HEK293T (cell line): ENCODE measurements at regions of chr17 and their contacts with region 1.

Region 1: DNA sequence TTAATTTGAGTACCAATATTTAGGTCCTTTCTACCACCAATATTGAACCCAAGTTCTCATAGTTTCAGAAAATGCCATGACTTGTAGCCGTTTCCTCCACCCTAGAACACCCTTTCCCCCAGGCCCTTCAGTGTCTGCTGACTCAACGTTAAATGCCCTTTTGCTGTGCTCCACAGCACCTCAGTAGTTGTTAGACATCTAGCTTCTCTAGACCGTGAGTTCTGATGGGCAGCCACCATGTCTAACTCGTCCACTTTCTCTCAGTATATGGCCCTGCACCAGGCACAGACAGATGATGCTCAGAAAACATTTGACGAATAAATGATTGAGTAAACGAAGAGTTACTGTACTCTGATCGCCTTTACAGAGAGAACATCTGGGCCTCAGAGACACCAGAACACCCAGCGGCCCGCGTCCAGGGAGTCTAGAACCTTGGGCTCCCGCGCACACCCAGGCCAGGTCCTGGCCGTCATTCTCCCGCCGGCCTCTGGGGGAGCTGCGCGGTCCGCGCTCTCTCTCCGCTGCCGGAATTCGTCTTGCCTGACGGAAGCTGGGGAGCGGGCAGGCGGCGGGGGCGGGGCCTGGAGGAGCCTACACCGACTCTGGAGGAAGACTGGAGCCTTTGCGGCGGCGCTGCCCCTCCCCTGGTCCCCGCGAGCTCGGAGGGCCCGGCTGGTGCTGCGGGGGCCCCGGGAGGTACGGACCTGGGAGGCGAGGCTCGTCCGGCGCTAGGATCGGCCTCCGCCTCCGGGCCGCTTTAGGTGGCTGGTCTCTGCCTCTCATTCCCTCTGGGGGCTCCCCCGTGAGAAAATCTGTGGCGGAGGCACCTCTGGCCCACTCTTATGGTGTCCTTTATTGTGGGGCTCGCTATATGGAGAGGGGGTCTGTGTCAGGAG is at the start of gene NKIRAS2:
- DNase-seq: peak; percentile 89

Region 2: GRCh38 chr17:41801374-41802271 is 218.1 kb before region 1 on chr17:
- CTCF ChIA-PET with region 1: no interaction called
- POLR2A ChIA-PET with region 1: no interaction called
- DNase-seq: peak; percentile 88

Region 3: DNA sequence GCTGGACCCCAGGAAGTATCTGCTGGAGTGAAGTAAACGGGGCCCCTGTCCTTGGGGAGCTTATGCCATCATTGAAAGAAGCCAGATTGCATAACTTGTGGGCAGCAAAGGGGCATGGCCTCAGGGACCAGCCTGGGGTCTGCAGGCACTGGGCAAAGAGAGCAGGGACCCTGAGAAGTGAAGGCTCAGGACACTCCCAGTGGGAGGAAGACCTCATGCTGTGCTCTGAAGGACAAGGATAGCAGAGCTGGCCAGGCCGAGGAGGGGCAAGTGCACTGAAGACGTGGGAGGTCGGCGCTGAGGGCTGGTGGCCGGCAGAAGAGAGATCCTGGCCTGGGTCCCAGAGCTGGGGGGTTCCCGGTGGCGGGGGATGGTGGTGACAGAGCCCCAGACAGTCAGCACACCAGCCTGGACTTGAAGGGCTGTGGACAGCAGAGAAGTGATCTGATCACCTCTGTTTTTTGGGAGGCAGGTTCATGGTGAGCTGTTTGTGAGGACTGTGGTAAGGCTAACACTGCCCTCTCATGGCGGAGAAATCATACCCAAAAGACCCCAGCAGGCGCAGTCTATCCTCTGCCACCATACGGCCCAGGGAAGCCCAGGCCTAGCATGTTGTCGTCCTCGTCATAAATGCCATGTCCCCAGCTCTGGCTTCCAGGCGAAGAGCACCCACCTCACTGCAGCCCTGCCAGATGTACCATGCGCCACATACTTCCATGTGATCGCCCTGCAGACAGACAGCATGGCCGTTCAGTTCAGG is 60.2 kb before region 1 on chr17:
- CTCF ChIA-PET with region 1: interaction called, 10 read pairs
- POLR2A ChIA-PET with region 1: interaction called, 117 read pairs
- DNase-seq: peak; percentile 60

Region 4: DNA sequence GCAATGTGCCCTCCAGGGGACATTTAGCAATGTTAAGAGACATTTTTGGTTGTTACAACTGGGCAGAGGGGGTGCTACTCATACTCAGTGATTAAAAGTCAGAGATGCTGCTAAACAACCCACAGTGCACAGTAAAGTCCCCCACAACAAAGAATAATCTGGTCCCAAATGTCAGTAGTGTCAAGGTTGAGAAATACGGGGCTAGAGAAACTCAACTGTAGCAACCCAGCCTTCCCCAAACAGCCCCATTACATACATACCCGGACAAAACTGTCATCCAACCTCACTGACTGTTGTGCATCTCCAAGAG is 22.9 kb before region 1 on chr17:
- CTCF ChIA-PET with region 1: interaction called, 3 read pairs
- POLR2A ChIA-PET with region 1: interaction called, 11 read pairs
- DNase-seq: no peak

Region 5: GRCh38 chr17:42039794-42040763 is 20.3 kb after region 1 on chr17:
- CTCF ChIA-PET with region 1: interaction called, 3 read pairs
- POLR2A ChIA-PET with region 1: interaction called, 23 read pairs
- DNase-seq: no peak

Region 6: GRCh38 chr17:42101513-42102319 is 82.0 kb after region 1 on chr17:
- CTCF ChIA-PET with region 1: interaction called, 7 read pairs
- POLR2A ChIA-PET with region 1: interaction called, 16 read pairs
- DNase-seq: peak; percentile 87

Region 7: GRCh38 chr17:42287926-42288802 is 268.4 kb after region 1 on chr17 and contains the start of gene STAT5A:
- CTCF ChIA-PET with region 1: no interaction called
- POLR2A ChIA-PET with region 1: no interaction called
- DNase-seq: no peak